A549 (cell line): ENCODE measurements at regions of chr3 and their contacts with region 1.

Region 1: DNA sequence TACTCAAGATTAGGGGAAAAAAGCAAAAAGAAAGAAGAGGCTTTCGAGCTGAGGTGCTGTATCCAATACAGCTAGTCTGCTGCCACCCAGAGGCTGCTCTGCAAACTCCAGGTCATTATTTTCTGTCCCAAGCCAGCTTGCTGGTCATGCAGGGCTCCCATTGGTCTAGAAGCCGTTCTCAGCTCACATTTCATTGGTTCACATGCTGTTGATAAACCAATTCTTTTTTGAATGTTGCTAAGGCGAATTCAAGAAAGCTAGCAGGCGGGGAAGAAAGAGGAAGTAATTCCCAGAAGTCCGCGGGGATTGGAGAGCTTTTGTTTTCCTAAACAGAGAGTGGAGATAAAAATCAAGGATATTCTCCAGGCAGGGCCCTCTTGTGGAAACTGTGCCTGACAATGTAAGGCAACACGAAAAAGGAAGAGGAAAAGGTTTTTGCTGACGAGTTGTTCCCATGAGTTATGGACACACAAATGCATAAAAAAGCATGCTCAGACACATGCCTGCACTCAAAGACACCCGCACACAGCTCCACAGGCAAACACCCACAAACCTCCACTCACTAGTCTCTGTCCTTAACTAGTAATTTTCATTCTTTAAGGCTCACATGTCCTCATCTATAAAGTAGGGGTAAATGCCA is 33.4 kb downstream of the FSTL1 start:
- DNase-seq: peak; percentile 97 to 99
- ATAC-seq: peak; percentile 92 to 98
- H3K4me3 ChIP-seq: peak overlapping the region; percentile 30
- H3K27ac ChIP-seq: peak overlapping the region; percentile 69 to 78
- H3K4me1 ChIP-seq: peaks cover 22% of the 10 kb centered on the region
- CTCF ChIP-seq: peak; percentile 95
- EP300 ChIP-seq: no peak
- POLR2A ChIP-seq: no peak
- RAD21 ChIP-seq: peak; percentile 86 to 87

Region 2: DNA sequence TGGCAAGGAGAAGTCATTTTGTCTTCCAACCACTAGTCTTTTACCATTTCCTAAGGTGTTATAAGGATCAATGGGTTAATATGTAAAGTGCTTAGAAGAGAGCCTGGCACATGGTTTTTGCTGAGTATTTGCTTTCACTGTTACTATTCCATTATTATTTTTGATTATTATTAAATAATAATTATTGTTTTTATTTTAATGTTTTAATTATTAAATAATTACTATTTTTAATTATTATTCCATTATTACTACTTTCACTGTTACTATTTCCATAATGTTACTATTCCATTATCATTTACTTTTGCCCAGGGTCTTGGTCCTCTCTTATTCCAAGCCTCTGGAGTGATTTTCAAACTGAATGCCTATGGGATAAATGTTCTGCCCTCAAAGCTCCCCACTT is 15.1 kb before region 1 on chr3:
- CTCF ChIA-PET with region 1: interaction called, 23 read pairs
- POLR2A ChIA-PET with region 1: no interaction called
- DNase-seq: no peak
- ATAC-seq: no peak
- H3K4me3 ChIP-seq: no peak overlapping the region
- H3K27ac ChIP-seq: no peak overlapping the region
- H3K4me1 ChIP-seq: no peaks in the 10 kb centered on the region
- CTCF ChIP-seq: no peak
- EP300 ChIP-seq: no peak
- POLR2A ChIP-seq: no peak
- RAD21 ChIP-seq: no peak

Region 3: DNA sequence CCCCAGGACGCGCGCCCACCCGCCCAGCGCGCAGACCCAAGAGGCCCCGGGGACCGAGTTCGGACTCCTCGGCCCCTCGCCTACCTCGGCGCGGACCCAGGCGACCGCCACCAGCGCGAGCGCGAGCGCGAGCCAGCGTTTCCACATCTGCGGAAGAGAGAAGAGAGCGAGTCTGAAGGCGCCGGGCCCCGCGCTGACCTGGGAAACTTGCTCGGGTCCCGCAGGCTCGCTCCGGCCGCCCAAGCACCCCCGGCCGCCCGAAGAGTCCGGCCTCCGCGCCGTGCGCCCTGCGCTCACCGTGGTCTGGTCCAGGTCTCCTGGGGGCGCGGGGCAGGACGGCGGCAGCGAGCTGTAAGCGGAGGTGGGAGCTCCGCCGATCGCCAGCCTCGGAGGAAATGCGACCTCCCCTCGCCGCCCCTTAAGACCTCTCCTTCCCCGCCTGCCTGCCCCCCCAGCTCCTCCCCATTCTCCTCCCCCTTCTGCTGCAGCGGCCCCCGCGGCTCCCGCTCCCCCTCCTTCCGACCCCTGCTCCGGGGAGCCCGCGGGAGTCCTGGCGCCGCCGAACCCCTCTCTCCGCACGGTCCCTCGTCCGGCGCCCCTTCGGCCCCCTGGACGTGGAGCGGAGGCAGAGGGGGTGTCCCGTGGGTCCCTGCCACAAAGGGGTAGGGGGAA is 33.3 kb after region 1 on chr3 and contains the start of gene FSTL1:
- CTCF ChIA-PET with region 1: interaction called, 157 read pairs
- POLR2A ChIA-PET with region 1: interaction called, 5 read pairs
- DNase-seq: peak; percentile 32 to 41
- ATAC-seq: peak; percentile 74 to 78
- H3K4me3 ChIP-seq: peak within 1 kb of the TSS; percentile 81
- H3K27ac ChIP-seq: peak within 1 kb of the TSS; percentile 80 to 94
- H3K4me1 ChIP-seq: peaks cover 21% of the 10 kb centered on the region
- CTCF ChIP-seq: no peak
- EP300 ChIP-seq: no peak
- POLR2A ChIP-seq: peak; percentile 72
- RAD21 ChIP-seq: no peak
- polyA plus RNA-seq, gene FSTL1: 57.7 and 84.7 TPM in 2 replicates

Region 4: GRCh38 chr3:120506828-120507774 is 89.7 kb after region 1 on chr3:
- CTCF ChIA-PET with region 1: interaction called, 64 read pairs
- POLR2A ChIA-PET with region 1: no interaction called
- DNase-seq: peak; percentile 40 to 46
- ATAC-seq: peak; percentile 54 to 83; a peak in 4 of 6 replicates
- H3K4me3 ChIP-seq: no peak overlapping the region
- H3K27ac ChIP-seq: no peak overlapping the region
- H3K4me1 ChIP-seq: no peaks in the 10 kb centered on the region
- CTCF ChIP-seq: peak; percentile 61
- EP300 ChIP-seq: no peak
- POLR2A ChIP-seq: no peak
- RAD21 ChIP-seq: peak; percentile 51 to 56

Region 5: DNA sequence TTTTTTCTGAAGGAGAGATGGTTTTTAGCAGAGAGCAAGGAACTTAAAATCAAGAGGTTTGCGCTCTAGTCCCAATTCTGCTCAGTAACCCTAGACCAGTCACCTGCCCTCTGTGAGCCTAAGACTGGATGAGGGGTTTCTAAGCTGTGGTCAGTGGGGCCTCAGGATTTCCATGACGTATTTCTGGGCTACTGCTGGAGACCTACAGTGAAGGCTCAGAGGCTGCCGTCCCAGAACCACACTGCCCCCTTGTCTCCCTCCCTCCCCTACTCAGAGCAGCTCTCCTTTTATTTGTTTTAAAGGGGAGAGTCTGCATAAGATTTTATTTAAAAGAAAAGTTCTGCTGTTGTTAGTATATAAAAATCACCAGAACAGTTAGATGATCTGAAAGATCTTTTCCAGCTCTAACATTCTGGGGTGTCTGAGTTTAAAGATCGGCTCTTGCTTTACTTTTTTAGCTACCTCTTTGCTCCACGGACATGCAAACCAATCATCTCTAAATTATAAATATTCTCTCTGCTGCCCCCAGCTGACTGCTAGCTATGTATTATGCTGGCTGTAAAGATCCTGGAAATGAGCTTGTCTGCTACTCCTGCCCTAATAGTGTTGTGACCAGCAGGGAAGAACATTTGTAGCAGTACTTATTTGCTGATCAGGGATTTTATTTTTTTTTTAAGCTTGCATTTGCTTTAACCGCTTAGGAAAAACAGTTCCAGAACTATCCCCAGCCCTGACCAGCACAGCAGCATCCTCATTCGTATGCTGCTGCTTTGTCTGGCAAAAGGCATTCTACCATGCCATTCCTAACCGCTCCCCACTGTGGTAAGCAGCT is 150.2 kb after region 1 on chr3:
- CTCF ChIA-PET with region 1: interaction called, 22 read pairs
- POLR2A ChIA-PET with region 1: no interaction called
- DNase-seq: peak in 1 of 2 experiments; percentile 45
- ATAC-seq: peak; percentile 95 to 96
- H3K4me3 ChIP-seq: peak overlapping the region; percentile 28; the same call in 2 of the 3 replicates
- H3K27ac ChIP-seq: peak overlapping the region in 1 of 2 experiments; percentile 45; a peak in 2 of 6 replicates
- H3K4me1 ChIP-seq: peaks cover 4% of the 10 kb centered on the region; the same call in 2 of the 3 replicates
- CTCF ChIP-seq: peak; percentile 58
- EP300 ChIP-seq: no peak
- POLR2A ChIP-seq: no peak
- RAD21 ChIP-seq: peak; percentile 15 to 21; a peak in 1 of 5 replicates

Region 6: DNA sequence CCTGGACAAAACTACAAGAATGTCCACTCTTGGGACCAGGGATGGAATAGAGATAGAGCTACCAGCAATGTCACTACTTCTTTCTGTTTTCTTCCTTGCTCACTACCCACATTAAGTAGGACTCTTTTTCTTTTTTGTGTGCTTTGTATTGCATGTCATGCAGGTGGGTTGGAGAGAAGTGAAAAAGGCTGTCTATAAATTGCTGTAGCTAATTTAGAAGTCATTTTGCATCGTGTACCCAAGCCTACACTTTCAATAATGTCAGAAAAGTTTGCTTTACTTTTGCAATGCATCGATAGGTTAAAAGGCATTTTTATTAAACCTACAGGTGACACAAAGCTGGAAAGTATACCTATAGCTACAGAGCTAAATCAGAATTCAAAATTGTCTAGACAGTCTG is 384.1 kb after region 1 on chr3:
- CTCF ChIA-PET with region 1: no interaction called
- POLR2A ChIA-PET with region 1: no interaction called
- DNase-seq: no peak
- ATAC-seq: no peak
- H3K4me3 ChIP-seq: no peak overlapping the region
- H3K27ac ChIP-seq: no peak overlapping the region
- H3K4me1 ChIP-seq: no peaks in the 10 kb centered on the region; the same call in 2 of the 3 replicates
- CTCF ChIP-seq: no peak
- EP300 ChIP-seq: no peak
- POLR2A ChIP-seq: no peak
- RAD21 ChIP-seq: no peak